Activated CD4-positive, alpha-beta T cell treated with anti-CD3 and anti-CD28 coated beads, Interleukin-2, amount 10 ng/mL, durations not matched to agents 7 days and 5 days (primary cell): ENCODE measurements at regions of chr15 and their contacts with region 1.

Region 1: DNA sequence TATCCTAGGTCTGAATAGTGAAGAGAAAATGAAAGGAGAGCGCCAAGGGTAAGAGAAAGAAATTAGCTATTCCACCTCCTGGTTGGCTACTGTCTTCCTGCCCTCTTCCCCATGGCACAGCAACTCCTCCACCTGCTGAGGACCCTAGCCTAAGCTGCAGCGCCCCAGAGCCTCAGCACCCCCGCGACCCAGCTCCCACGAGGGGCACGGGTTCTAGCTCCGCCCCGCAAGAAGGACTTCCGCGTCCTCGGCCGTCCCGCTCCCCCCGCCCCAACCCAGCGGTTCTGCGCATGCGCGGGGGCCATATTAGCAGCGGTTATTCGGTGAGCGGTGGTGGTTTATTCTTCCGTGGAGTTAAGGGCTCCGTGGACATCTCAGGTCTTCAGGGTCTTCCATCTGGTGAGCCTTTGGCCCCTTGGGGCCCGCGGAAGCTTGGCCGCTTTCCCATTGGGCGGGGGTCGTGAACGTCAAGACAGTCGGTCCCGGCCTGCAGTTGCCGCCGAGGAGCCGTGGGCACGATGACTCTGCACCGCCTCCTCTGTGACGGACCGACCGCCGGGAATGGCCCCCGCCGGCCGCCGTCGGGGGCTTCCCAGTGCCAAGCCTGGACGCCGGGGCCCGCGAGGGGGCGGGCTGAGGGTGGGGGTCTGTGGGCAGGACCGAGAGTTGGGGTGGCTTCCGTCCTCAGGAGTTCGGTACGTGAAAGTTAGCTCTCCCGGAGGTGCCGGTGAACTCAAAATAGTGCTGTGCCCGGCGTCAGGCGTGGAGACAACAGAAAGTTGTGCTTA is at the start of gene PSMA4:
- DNase-seq: peak; percentile 95
- H3K4me3 Mint-ChIP-seq: peak within 1 kb of the TSS; percentile 84
- H3K27ac Mint-ChIP-seq: peak within 1 kb of the TSS; percentile 92
- H3K4me1 Mint-ChIP-seq: peaks cover 33% of the 10 kb centered on the region
- H3K27me3 Mint-ChIP-seq: no peaks in the 10 kb centered on the region
- total RNA-seq, gene PSMA4: 255 to 259 TPM

Region 2: GRCh38 chr15:78565097-78565951 is 25.0 kb after region 1 on chr15 and contains the start of gene CHRNA5:
- CTCF ChIA-PET with region 1: interaction called, 11 read pairs
- POLR2A ChIA-PET with region 1: no interaction called
- DNase-seq: peak; percentile 69
- H3K4me3 Mint-ChIP-seq: peak within 1 kb of the TSS; percentile 80
- H3K27ac Mint-ChIP-seq: peak within 1 kb of the TSS; percentile 83
- H3K4me1 Mint-ChIP-seq: peaks cover 26% of the 10 kb centered on the region
- H3K27me3 Mint-ChIP-seq: peaks cover 28% of the 10 kb centered on the region
- total RNA-seq, gene CHRNA5: 2.4 to 4.0 TPM